ENCODE measurements at regions of chr14 and their contacts with region 1.

Region 1: GRCh38 chr14:54773171-54773975 is 129.3 kb downstream of the GCH1 start:
- DNase-seq: peak; percentile 73
- H3K4me3 Mint-ChIP-seq: peak overlapping the region; percentile 68
- H3K27ac Mint-ChIP-seq: peak overlapping the region; percentile 79
- H3K4me1 Mint-ChIP-seq: peaks cover 40% of the 10 kb centered on the region
- H3K27me3 Mint-ChIP-seq: peaks cover 40% of the 10 kb centered on the region

Region 2: GRCh38 chr14:54366736-54367735 is 406.3 kb before region 1 on chr14:
- intact Hi-C with region 1: loop called (anchors 1 kb)
- DNase-seq: no peak
- H3K4me3 Mint-ChIP-seq: no peak overlapping the region
- H3K27ac Mint-ChIP-seq: no peak overlapping the region
- H3K4me1 Mint-ChIP-seq: no peaks in the 10 kb centered on the region
- H3K27me3 Mint-ChIP-seq: peaks cover 12% of the 10 kb centered on the region

Region 3: DNA sequence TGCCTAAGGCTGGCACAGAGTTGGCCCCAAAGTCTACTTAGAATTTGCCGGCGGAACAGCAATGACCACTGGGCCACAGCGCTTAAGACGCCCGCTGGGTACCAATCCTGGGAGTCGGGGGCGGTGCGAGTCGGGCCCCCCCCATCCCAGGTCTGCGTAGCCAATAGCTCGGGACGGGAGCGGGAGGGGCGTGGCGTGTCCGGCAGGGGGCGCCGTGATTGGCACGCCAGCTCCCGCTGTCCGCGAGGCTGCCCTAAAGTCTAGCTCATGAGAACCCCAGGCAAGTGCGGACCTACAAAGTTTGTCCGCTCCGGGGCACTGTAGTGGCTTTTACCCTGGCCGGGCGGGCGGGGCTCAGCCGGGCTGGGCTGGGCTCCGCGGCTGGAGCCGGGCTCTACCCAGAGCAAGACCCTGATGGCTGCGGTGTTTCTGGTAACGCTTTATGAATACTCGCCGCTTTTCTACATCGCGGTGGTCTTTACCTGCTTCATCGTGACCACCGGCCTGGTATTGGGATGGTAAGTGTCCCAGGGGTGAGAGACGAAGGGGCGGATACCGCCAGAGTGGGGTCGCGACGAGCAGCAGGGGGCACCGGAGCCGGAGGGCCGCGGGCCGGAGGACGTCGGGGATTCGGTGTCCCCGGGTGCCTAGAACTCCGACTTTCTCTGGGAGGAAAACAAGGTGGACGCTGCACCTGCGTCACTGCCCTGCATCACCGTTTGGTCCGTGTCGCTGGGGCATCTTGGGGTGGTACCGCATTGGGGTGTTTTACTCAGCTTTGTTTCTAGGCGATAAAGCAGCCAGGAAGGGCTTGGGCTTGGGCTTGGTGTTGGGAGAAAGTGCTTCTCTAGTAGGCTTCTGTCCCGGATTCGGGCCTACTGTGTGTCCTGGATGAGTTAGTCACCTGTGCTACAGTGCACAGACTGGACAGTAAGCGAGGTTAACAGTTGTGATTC is 263.5 kb before region 1 on chr14 and contains the start of gene CGRRF1:
- intact Hi-C with region 1: loop called (anchors 1 kb)
- DNase-seq: peak; percentile 94
- H3K4me3 Mint-ChIP-seq: peak within 1 kb of the TSS; percentile 95
- H3K27ac Mint-ChIP-seq: peak within 1 kb of the TSS; percentile 83
- H3K4me1 Mint-ChIP-seq: peaks cover 40% of the 10 kb centered on the region
- H3K27me3 Mint-ChIP-seq: peaks cover 8% of the 10 kb centered on the region
- total RNA-seq, gene CGRRF1: 8.5 and 13.2 TPM in 2 replicates

Region 4: GRCh38 chr14:54642801-54643697 is 130.3 kb before region 1 on chr14:
- intact Hi-C with region 1: loop called (anchors 1 kb)
- DNase-seq: no peak
- H3K4me3 Mint-ChIP-seq: no peak overlapping the region
- H3K27ac Mint-ChIP-seq: no peak overlapping the region
- H3K4me1 Mint-ChIP-seq: peaks cover 6% of the 10 kb centered on the region
- H3K27me3 Mint-ChIP-seq: peaks cover 16% of the 10 kb centered on the region

Region 5: GRCh38 chr14:54691525-54692283 is 81.7 kb before region 1 on chr14:
- intact Hi-C with region 1: loop called (anchors 1 kb)
- DNase-seq: peak; percentile 22
- H3K4me3 Mint-ChIP-seq: no peak overlapping the region
- H3K27ac Mint-ChIP-seq: no peak overlapping the region
- H3K4me1 Mint-ChIP-seq: peaks cover 9% of the 10 kb centered on the region
- H3K27me3 Mint-ChIP-seq: peaks cover 25% of the 10 kb centered on the region

Region 6: GRCh38 chr14:54805521-54806322 is 32.3 kb after region 1 on chr14:
- intact Hi-C with region 1: loop called (anchors 1 kb)
- DNase-seq: peak; percentile 48
- H3K4me3 Mint-ChIP-seq: no peak overlapping the region
- H3K27ac Mint-ChIP-seq: no peak overlapping the region
- H3K4me1 Mint-ChIP-seq: no peaks in the 10 kb centered on the region
- H3K27me3 Mint-ChIP-seq: peaks cover 10% of the 10 kb centered on the region